CD4-positive, alpha-beta T cell (primary cell): ENCODE measurements at regions of chr3 and their contacts with region 1.

Region 1: DNA sequence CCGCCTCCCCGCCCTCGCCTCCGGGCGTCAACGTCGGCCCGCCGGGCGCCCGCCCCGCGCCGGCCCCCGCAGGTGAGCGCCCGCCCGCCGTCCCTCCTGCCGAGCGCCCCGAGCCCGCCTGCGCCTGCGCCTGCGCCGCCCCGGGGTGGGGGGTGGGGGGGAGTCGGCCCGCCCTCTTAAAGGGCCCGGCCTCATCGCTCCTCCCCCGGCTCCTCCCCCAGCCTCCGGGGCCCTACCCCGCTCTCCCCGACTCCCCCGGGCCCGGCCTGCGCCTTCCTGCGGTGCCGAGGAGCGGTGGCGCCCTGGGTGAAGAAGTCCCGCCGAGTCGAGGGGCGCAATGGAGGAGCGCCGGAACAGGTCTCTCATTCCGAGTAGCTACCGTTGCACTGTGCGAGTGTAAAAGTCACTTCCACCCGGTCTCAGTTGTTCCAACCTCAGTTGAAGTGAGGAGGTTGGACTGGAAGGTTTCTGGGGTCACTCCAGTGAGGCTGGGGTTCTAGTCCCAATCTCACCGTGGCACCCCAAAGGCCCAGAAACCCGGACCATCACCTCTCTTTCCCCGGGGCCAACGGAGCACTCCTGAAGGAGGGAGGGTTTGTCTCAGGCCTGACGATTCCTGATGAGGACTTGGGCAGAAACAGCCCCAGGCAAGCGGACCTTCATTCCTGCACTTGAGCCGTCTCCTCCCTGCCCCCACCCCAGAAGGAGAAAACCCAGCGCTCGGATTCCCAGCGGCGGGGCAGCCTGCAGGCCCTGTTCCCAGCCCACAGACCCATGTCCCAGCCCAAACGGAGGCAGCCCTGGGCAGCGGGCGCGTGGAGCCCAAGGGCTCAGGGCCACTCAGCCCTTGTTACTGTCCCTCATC is 1.5 kb upstream of the TNK2 start:
- DNase-seq: peak; percentile 84 to 97 (median 92)
- ATAC-seq: peak; percentile 55
- H3K4me3 ChIP-seq: peak overlapping the region; percentile 51
- H3K4me3 Mint-ChIP-seq: peak overlapping the region; percentile 85
- H3K27ac ChIP-seq: peak overlapping the region; percentile 44 to 59
- H3K27ac Mint-ChIP-seq: peak overlapping the region; percentile 72
- H3K4me1 ChIP-seq: peaks cover 53% of the 10 kb centered on the region
- H3K4me1 Mint-ChIP-seq: peaks cover 37% of the 10 kb centered on the region
- H3K27me3 ChIP-seq: no peaks in the 10 kb centered on the region
- H3K27me3 Mint-ChIP-seq: no peaks in the 10 kb centered on the region
- CTCF ChIP-seq: no peak

Region 2: DNA sequence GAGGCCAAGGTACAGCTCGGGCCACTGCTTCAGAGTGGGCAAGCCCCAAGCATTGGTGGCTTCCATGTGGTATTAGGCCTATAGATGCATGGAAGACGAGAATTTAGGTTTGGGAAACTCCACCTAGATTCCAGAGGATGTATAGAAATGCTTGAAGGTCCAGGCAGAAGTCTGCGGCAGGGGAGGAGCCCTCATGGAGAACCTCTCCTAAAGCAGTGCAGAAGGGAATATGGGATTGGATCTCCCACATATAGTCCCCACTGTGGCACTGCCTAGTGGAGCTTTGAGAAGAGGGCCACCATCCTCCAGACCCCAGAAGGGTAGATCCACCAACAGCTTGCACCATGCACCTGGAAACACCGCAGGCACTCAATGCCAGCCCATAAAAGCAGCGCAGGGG is 590.8 kb before region 1 on chr3:
- CTCF ChIA-PET with region 1: no interaction called
- POLR2A ChIA-PET with region 1: no interaction called
- intact Hi-C with region 1: no loop called
- DNase-seq: no peak
- ATAC-seq: no peak
- H3K4me3 ChIP-seq: no peak overlapping the region
- H3K4me3 Mint-ChIP-seq: no peak overlapping the region
- H3K27ac ChIP-seq: no peak overlapping the region
- H3K27ac Mint-ChIP-seq: no peak overlapping the region
- H3K4me1 ChIP-seq: no peaks in the 10 kb centered on the region
- H3K4me1 Mint-ChIP-seq: peaks cover 23% of the 10 kb centered on the region
- H3K27me3 ChIP-seq: no peaks in the 10 kb centered on the region
- H3K27me3 Mint-ChIP-seq: no peaks in the 10 kb centered on the region
- CTCF ChIP-seq: no peak

Region 3: DNA sequence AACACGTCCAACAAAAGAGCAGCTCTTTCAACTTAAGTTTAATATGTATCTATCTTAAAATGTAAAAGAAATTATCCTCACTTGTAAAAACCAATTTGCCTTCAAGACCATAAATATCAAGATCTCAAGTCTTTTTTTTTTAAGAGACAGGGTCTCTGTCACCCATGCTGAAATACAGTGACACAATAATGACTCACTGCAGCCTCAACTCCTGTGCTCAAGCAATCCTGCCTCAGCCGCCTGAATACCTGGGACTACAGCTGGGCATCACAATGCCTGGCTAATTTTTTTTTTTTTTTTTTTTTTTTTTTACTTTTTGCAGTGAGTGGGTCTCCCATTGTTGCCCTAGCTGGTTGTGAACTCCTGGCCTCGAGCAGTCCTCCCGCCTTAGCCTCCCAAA is 493.1 kb before region 1 on chr3:
- CTCF ChIA-PET with region 1: no interaction called
- POLR2A ChIA-PET with region 1: no interaction called
- intact Hi-C with region 1: no loop called
- DNase-seq: no peak
- ATAC-seq: no peak
- H3K4me3 ChIP-seq: no peak overlapping the region
- H3K4me3 Mint-ChIP-seq: no peak overlapping the region
- H3K27ac ChIP-seq: no peak overlapping the region
- H3K27ac Mint-ChIP-seq: peak overlapping the region; percentile 40
- H3K4me1 ChIP-seq: peaks cover 18% of the 10 kb centered on the region
- H3K4me1 Mint-ChIP-seq: peaks cover 62% of the 10 kb centered on the region
- H3K27me3 ChIP-seq: no peaks in the 10 kb centered on the region
- H3K27me3 Mint-ChIP-seq: no peaks in the 10 kb centered on the region
- CTCF ChIP-seq: no peak

Region 4: GRCh38 chr3:195442573-195443390 is 467.1 kb before region 1 on chr3 and contains the start of gene ACAP2:
- CTCF ChIA-PET with region 1: no interaction called
- POLR2A ChIA-PET with region 1: no interaction called
- intact Hi-C with region 1: loop called in 1 of 2 experiments (anchors 5 kb)
- DNase-seq: peak; percentile 95 to 100 (median 99)
- ATAC-seq: peak; percentile 91
- H3K4me3 ChIP-seq: peak within 1 kb of the TSS; percentile 89
- H3K4me3 Mint-ChIP-seq: peak within 1 kb of the TSS; percentile 98
- H3K27ac ChIP-seq: peak within 1 kb of the TSS; percentile 74 to 85
- H3K27ac Mint-ChIP-seq: peak within 1 kb of the TSS; percentile 93
- H3K4me1 ChIP-seq: peaks cover 32% of the 10 kb centered on the region
- H3K4me1 Mint-ChIP-seq: peaks cover 65% of the 10 kb centered on the region
- H3K27me3 ChIP-seq: no peaks in the 10 kb centered on the region
- H3K27me3 Mint-ChIP-seq: no peaks in the 10 kb centered on the region
- CTCF ChIP-seq: no peak
- total RNA-seq, gene ACAP2: 50.7 to 51.4 TPM

Region 5: GRCh38 chr3:195549931-195550519 is 359.9 kb before region 1 on chr3:
- CTCF ChIA-PET with region 1: no interaction called
- POLR2A ChIA-PET with region 1: interaction called, 15 read pairs
- intact Hi-C with region 1: loop called in 1 of 2 experiments (anchors 5 kb)
- DNase-seq: peak; percentile 69 to 94 (median 80)
- ATAC-seq: peak; percentile 78
- H3K4me3 ChIP-seq: peak overlapping the region; percentile 45
- H3K4me3 Mint-ChIP-seq: peak overlapping the region; percentile 83
- H3K27ac ChIP-seq: peak overlapping the region; percentile 80 to 81
- H3K27ac Mint-ChIP-seq: peak overlapping the region; percentile 93
- H3K4me1 ChIP-seq: peaks cover 92% of the 10 kb centered on the region
- H3K4me1 Mint-ChIP-seq: peaks cover 93% of the 10 kb centered on the region
- H3K27me3 ChIP-seq: no peaks in the 10 kb centered on the region
- H3K27me3 Mint-ChIP-seq: no peaks in the 10 kb centered on the region
- CTCF ChIP-seq: no peak

Region 6: GRCh38 chr3:195850857-195851543 is 58.9 kb before region 1 on chr3:
- CTCF ChIA-PET with region 1: interaction called, 10 read pairs
- POLR2A ChIA-PET with region 1: interaction called, 3 read pairs
- intact Hi-C with region 1: no loop called
- DNase-seq: peak; percentile 75 to 94 (median 86)
- ATAC-seq: peak; percentile 100
- H3K4me3 ChIP-seq: no peak overlapping the region
- H3K4me3 Mint-ChIP-seq: peak overlapping the region; percentile 7
- H3K27ac ChIP-seq: no peak overlapping the region
- H3K27ac Mint-ChIP-seq: no peak overlapping the region
- H3K4me1 ChIP-seq: peaks cover 5% of the 10 kb centered on the region
- H3K4me1 Mint-ChIP-seq: peaks cover 6% of the 10 kb centered on the region
- H3K27me3 ChIP-seq: no peaks in the 10 kb centered on the region
- H3K27me3 Mint-ChIP-seq: peaks cover 5% of the 10 kb centered on the region
- CTCF ChIP-seq: peak; percentile 100

Region 7: DNA sequence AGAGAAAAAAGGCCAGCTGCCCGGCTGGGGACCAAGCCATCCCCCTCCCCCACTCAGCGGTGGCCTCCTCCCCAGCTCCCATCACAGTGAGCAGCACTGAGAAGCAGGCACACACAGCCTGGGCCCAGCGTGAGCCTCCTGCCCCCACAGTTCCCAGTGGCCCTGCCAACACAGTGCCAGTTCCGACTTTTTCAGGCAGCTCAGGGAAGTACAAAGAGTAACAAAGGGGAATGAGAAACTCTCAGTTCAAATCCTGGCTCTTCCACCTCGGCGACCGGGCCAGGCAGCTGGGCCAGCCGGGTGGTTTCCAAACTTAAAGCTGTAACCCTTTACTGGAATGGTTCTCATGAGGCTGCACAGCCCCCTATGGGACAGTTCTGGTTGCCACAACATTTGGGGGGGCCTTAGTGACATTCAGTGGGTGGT is 20.0 kb before region 1 on chr3:
- CTCF ChIA-PET with region 1: interaction called, 91 read pairs
- POLR2A ChIA-PET with region 1: interaction called, 231 read pairs
- intact Hi-C with region 1: loop called (anchors 1 kb)
- DNase-seq: no peak
- ATAC-seq: no peak
- H3K4me3 ChIP-seq: no peak overlapping the region
- H3K4me3 Mint-ChIP-seq: no peak overlapping the region
- H3K27ac ChIP-seq: no peak overlapping the region
- H3K27ac Mint-ChIP-seq: no peak overlapping the region
- H3K4me1 ChIP-seq: peaks cover 35% of the 10 kb centered on the region
- H3K4me1 Mint-ChIP-seq: peaks cover 6% of the 10 kb centered on the region
- H3K27me3 ChIP-seq: no peaks in the 10 kb centered on the region
- H3K27me3 Mint-ChIP-seq: no peaks in the 10 kb centered on the region
- CTCF ChIP-seq: no peak

Region 8: GRCh38 chr3:196081791-196082618 is 172.1 kb after region 1 on chr3 and contains the start of gene TFRC:
- CTCF ChIA-PET with region 1: no interaction called
- POLR2A ChIA-PET with region 1: no interaction called
- intact Hi-C with region 1: loop called in 1 of 2 experiments (anchors 5 kb)
- DNase-seq: peak; percentile 88 to 98 (median 95)
- ATAC-seq: peak; percentile 92
- H3K4me3 ChIP-seq: peak within 1 kb of the TSS; percentile 60
- H3K4me3 Mint-ChIP-seq: peak within 1 kb of the TSS; percentile 91
- H3K27ac ChIP-seq: peak within 1 kb of the TSS; percentile 83 to 95
- H3K27ac Mint-ChIP-seq: peak within 1 kb of the TSS; percentile 89
- H3K4me1 ChIP-seq: peaks cover 42% of the 10 kb centered on the region
- H3K4me1 Mint-ChIP-seq: peaks cover 45% of the 10 kb centered on the region
- H3K27me3 ChIP-seq: no peaks in the 10 kb centered on the region
- H3K27me3 Mint-ChIP-seq: no peaks in the 10 kb centered on the region
- CTCF ChIP-seq: no peak
- total RNA-seq, gene TFRC: 154 to 159 TPM

Region 9: GRCh38 chr3:197151569-197151968 is 1241.7 kb after region 1 on chr3:
- CTCF ChIA-PET with region 1: no interaction called
- POLR2A ChIA-PET with region 1: no interaction called
- intact Hi-C with region 1: no loop called
- DNase-seq: no peak
- ATAC-seq: no peak
- H3K4me3 ChIP-seq: no peak overlapping the region
- H3K4me3 Mint-ChIP-seq: no peak overlapping the region
- H3K27ac ChIP-seq: no peak overlapping the region
- H3K27ac Mint-ChIP-seq: no peak overlapping the region
- H3K4me1 ChIP-seq: no peaks in the 10 kb centered on the region
- H3K4me1 Mint-ChIP-seq: peaks cover 12% of the 10 kb centered on the region
- H3K27me3 ChIP-seq: no peaks in the 10 kb centered on the region
- H3K27me3 Mint-ChIP-seq: no peaks in the 10 kb centered on the region
- CTCF ChIP-seq: no peak